Common myeloid progenitor, CD34-positive (primary cell): ENCODE measurements at regions of chr2 and their contacts with region 1.

Region 1: GRCh38 chr2:177164584-177165052 is 48.0 kb upstream of the HNRNPA3 start:
- DNase-seq: peak; percentile 77 to 81 (median 77)
- H3K4me3 ChIP-seq: peak overlapping the region in 6 of 7 experiments; percentile 47 to 83 (median 70)
- H3K27ac ChIP-seq: peak overlapping the region; percentile 76 to 92
- H3K4me1 ChIP-seq: peaks cover 10 to 29% (median 23%) of the 10 kb centered on the region in 4 experiments
- H3K27me3 ChIP-seq: no peaks in the 10 kb centered on the region

Region 2: GRCh38 chr2:176804392-176804791 is 360.2 kb before region 1 on chr2:
- CTCF ChIA-PET with region 1: no interaction called
- POLR2A ChIA-PET with region 1: no interaction called
- DNase-seq: no peak
- H3K4me3 ChIP-seq: no peak overlapping the region
- H3K27ac ChIP-seq: no peak overlapping the region
- H3K4me1 ChIP-seq: no peaks in the 10 kb centered on the region
- H3K27me3 ChIP-seq: no peaks in the 10 kb centered on the region

Region 3: GRCh38 chr2:176873405-176873804 is 291.2 kb before region 1 on chr2:
- CTCF ChIA-PET with region 1: no interaction called
- POLR2A ChIA-PET with region 1: no interaction called
- DNase-seq: no peak
- H3K4me3 ChIP-seq: no peak overlapping the region
- H3K27ac ChIP-seq: no peak overlapping the region
- H3K4me1 ChIP-seq: no peaks in the 10 kb centered on the region
- H3K27me3 ChIP-seq: no peaks in the 10 kb centered on the region

Region 4: DNA sequence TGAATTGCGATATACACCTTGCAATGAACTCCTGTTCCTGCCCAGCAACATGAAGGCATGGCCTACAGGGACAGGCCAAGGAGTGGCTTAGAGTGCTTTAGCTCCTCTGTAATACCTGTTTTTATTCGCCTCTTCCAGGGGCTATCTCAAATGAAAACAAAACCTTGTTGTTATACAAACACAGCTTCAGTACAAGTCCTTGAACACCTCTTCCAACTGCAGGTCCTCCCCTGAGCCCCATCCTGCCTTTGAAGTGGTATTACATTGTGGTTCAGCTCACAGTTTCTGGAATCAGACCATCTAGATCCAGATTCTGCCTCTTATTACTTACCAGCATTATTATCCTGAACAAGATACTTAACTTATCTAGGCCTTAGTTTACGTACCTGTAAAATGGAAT is 35.0 kb before region 1 on chr2:
- CTCF ChIA-PET with region 1: no interaction called
- POLR2A ChIA-PET with region 1: no interaction called
- DNase-seq: no peak
- H3K4me3 ChIP-seq: no peak overlapping the region
- H3K27ac ChIP-seq: no peak overlapping the region
- H3K4me1 ChIP-seq: peaks cover 0 to 7% (median 1%) of the 10 kb centered on the region in 4 experiments
- H3K27me3 ChIP-seq: no peaks in the 10 kb centered on the region

Region 5: DNA sequence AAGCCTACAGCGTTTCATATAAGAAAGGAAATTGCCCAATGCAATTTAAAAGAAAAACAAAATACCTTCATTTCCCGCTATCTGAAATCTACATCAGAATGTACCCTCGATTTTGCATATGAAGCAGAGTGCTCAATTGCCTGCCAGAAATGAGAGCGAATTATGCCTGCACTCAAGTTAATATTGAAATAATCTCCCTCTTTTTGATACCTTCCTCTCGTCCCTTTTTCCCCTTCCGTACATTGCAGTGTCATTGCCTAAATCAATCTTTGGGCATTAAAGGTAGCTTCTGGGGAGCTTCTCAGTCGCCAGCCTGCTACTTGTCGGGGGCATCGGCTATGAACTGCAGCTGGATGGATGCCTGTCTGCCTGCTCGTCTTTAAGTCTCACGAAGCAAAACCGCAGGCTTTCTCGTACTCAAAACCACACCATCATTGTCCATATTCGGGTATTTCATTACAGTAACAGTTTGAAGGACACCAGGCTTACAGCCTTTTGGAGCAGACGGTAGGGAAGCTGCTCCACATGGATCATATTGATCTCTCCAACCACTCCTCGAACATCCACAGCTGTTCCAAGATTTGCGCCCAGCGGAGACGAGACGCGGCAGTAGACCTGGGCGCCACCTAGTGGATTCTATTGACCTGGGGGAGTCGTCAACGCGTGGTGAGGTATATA is 16.0 kb before region 1 on chr2:
- CTCF ChIA-PET with region 1: interaction called, 14 read pairs
- POLR2A ChIA-PET with region 1: no interaction called
- DNase-seq: peak; percentile 73 to 88 (median 80)
- H3K4me3 ChIP-seq: peak overlapping the region in 6 of 7 experiments; percentile 63 to 76 (median 66)
- H3K27ac ChIP-seq: no peak overlapping the region
- H3K4me1 ChIP-seq: peaks cover under 1 to 13% (median 9%) of the 10 kb centered on the region in 4 experiments
- H3K27me3 ChIP-seq: peaks cover 0 to 25% (median 9%) of the 10 kb centered on the region in 5 experiments

Region 6: DNA sequence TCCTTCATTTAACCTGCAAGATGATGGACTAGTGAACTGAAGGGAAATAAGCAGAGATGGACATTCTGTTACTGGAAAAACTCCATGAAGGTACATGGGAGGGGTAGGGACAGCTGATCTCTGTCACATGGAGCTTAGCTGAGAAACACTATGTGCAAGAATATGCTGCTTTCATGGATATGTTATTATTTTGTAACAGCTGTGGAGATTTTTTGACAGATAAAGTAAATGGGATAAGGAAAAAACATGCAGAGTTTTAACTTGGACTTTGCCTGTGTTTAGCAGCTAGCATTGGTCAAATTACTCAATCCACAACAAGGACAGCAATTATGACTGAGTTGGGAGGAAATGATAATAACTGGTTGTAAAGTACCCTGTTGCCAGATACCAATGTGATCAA is 19.2 kb after region 1 on chr2:
- CTCF ChIA-PET with region 1: interaction called, 12 read pairs
- POLR2A ChIA-PET with region 1: interaction called, 3 read pairs
- DNase-seq: no peak
- H3K4me3 ChIP-seq: no peak overlapping the region
- H3K27ac ChIP-seq: no peak overlapping the region
- H3K4me1 ChIP-seq: no peaks in the 10 kb centered on the region
- H3K27me3 ChIP-seq: no peaks in the 10 kb centered on the region

Region 7: GRCh38 chr2:177263451-177264208 is 99.0 kb after region 1 on chr2:
- CTCF ChIA-PET with region 1: interaction called, 47 read pairs
- POLR2A ChIA-PET with region 1: interaction called, 9 read pairs
- DNase-seq: peak; percentile 98 to 99 (median 99)
- H3K4me3 ChIP-seq: peak overlapping the region; percentile 83 to 98 (median 90)
- H3K27ac ChIP-seq: peak overlapping the region; percentile 99 to 100
- H3K4me1 ChIP-seq: peaks cover 29 to 57% (median 44%) of the 10 kb centered on the region in 4 experiments
- H3K27me3 ChIP-seq: no peaks in the 10 kb centered on the region

Region 8: GRCh38 chr2:177296040-177296439 is 131.4 kb after region 1 on chr2:
- CTCF ChIA-PET with region 1: interaction called, 20 read pairs
- POLR2A ChIA-PET with region 1: no interaction called
- DNase-seq: peak; percentile 50 to 60 (median 58)
- H3K4me3 ChIP-seq: no peak overlapping the region
- H3K27ac ChIP-seq: no peak overlapping the region
- H3K4me1 ChIP-seq: peaks cover 0 to 4% (median 0%) of the 10 kb centered on the region in 4 experiments
- H3K27me3 ChIP-seq: no peaks in the 10 kb centered on the region

Region 9: GRCh38 chr2:177413703-177414102 is 249.1 kb after region 1 on chr2:
- CTCF ChIA-PET with region 1: interaction called, 49 read pairs
- POLR2A ChIA-PET with region 1: no interaction called
- DNase-seq: no peak
- H3K4me3 ChIP-seq: no peak overlapping the region
- H3K27ac ChIP-seq: no peak overlapping the region
- H3K4me1 ChIP-seq: peaks cover 0 to 17% (median 7%) of the 10 kb centered on the region in 4 experiments
- H3K27me3 ChIP-seq: no peaks in the 10 kb centered on the region